GM12878 (cell line): ENCODE measurements at regions of chr11 and their contacts with region 1.

Region 1: GRCh38 chr11:64767344-64768299 is 7.8 kb upstream of the PYGM start:
- DNase-seq: no peak
- ATAC-seq: peak; percentile 56
- H3K4me3 ChIP-seq: no peak overlapping the region
- H3K27ac ChIP-seq: no peak overlapping the region
- H3K4me1 ChIP-seq: peaks cover 24% of the 10 kb centered on the region
- H3K27me3 ChIP-seq: no peaks in the 10 kb centered on the region
- CTCF ChIP-seq: peak; percentile 55 to 84 (median 72)
- EP300 ChIP-seq: no peak
- POLR2A ChIP-seq: peak; percentile 70
- RAD21 ChIP-seq: 0 out of 2 replicates have a peak, but pooled peaks have one; percentile 34

Region 2: GRCh38 chr11:64472593-64473455 is 294.8 kb before region 1 on chr11:
- CTCF ChIA-PET with region 1: no interaction called
- POLR2A ChIA-PET with region 1: no interaction called
- RAD21 ChIA-PET with region 1: no interaction called
- SMC1A ChIA-PET with region 1: no interaction called
- in situ Hi-C with region 1: no loop called
- intact Hi-C with region 1: no loop called
- DNase-seq: no peak
- ATAC-seq: no peak
- H3K4me3 ChIP-seq: no peak overlapping the region
- H3K27ac ChIP-seq: no peak overlapping the region
- H3K4me1 ChIP-seq: no peaks in the 10 kb centered on the region
- H3K27me3 ChIP-seq: peaks cover 0 to 2% of the 10 kb centered on the region in 2 experiments; a peak in 3 of 4 replicates
- CTCF ChIP-seq: no peak
- EP300 ChIP-seq: no peak
- POLR2A ChIP-seq: no peak
- RAD21 ChIP-seq: no peak

Region 3: GRCh38 chr11:64710418-64711137 is 57.0 kb before region 1 on chr11:
- CTCF ChIA-PET with region 1: no interaction called
- POLR2A ChIA-PET with region 1: no interaction called
- RAD21 ChIA-PET with region 1: no interaction called
- SMC1A ChIA-PET with region 1: no interaction called
- in situ Hi-C with region 1: no loop called
- intact Hi-C with region 1: no loop called
- DNase-seq: no peak
- ATAC-seq: no peak
- H3K4me3 ChIP-seq: no peak overlapping the region
- H3K27ac ChIP-seq: no peak overlapping the region
- H3K4me1 ChIP-seq: peaks cover 7% of the 10 kb centered on the region
- H3K27me3 ChIP-seq: peaks cover 4 to 10% of the 10 kb centered on the region in 2 experiments; a peak in 3 of 4 replicates
- CTCF ChIP-seq: no peak
- EP300 ChIP-seq: no peak
- POLR2A ChIP-seq: no peak
- RAD21 ChIP-seq: no peak

Region 4: GRCh38 chr11:64742889-64743590 is 24.6 kb before region 1 on chr11:
- CTCF ChIA-PET with region 1: interaction called, 16 read pairs
- POLR2A ChIA-PET with region 1: interaction called, 4 read pairs
- RAD21 ChIA-PET with region 1: interaction called, 5 read pairs
- SMC1A ChIA-PET with region 1: interaction called, 11 read pairs
- in situ Hi-C with region 1: no loop called
- intact Hi-C with region 1: loop called (anchors 2 kb)
- DNase-seq: no peak
- ATAC-seq: peak; percentile 70
- H3K4me3 ChIP-seq: peak overlapping the region; percentile 35
- H3K27ac ChIP-seq: no peak overlapping the region
- H3K4me1 ChIP-seq: peaks cover 29% of the 10 kb centered on the region
- H3K27me3 ChIP-seq: peaks cover 0 to 5% of the 10 kb centered on the region in 2 experiments; a peak in 3 of 4 replicates
- CTCF ChIP-seq: peak; percentile 69 to 93 (median 81)
- EP300 ChIP-seq: no peak
- POLR2A ChIP-seq: no peak
- RAD21 ChIP-seq: peak; percentile 62

Region 5: GRCh38 chr11:64787526-64788320 is 20.1 kb after region 1 on chr11:
- CTCF ChIA-PET with region 1: interaction called, 15 read pairs
- POLR2A ChIA-PET with region 1: interaction called, 7 read pairs
- RAD21 ChIA-PET with region 1: no interaction called
- SMC1A ChIA-PET with region 1: interaction called, 9 read pairs
- in situ Hi-C with region 1: no loop called
- intact Hi-C with region 1: no loop called
- DNase-seq: no peak
- ATAC-seq: peak; percentile 94
- H3K4me3 ChIP-seq: no peak overlapping the region
- H3K27ac ChIP-seq: no peak overlapping the region
- H3K4me1 ChIP-seq: peaks cover 5% of the 10 kb centered on the region
- H3K27me3 ChIP-seq: no peaks in the 10 kb centered on the region
- CTCF ChIP-seq: peak; percentile 68 to 87 (median 70)
- EP300 ChIP-seq: no peak
- POLR2A ChIP-seq: no peak
- RAD21 ChIP-seq: peak; percentile 70

Region 6: GRCh38 chr11:64803163-64803845 is 35.7 kb after region 1 on chr11 and contains the start of gene MAP4K2:
- CTCF ChIA-PET with region 1: interaction called, 3 read pairs
- POLR2A ChIA-PET with region 1: interaction called, 12 read pairs
- RAD21 ChIA-PET with region 1: interaction called, 8 read pairs
- SMC1A ChIA-PET with region 1: interaction called, 4 read pairs
- in situ Hi-C with region 1: no loop called
- intact Hi-C with region 1: no loop called
- DNase-seq: peak; percentile 3
- ATAC-seq: peak; percentile 73
- H3K4me3 ChIP-seq: peak within 1 kb of the TSS; percentile 87
- H3K27ac ChIP-seq: peak within 1 kb of the TSS; percentile 92
- H3K4me1 ChIP-seq: peaks cover 37% of the 10 kb centered on the region
- H3K27me3 ChIP-seq: no peaks in the 10 kb centered on the region
- CTCF ChIP-seq: peak in 2 of 3 experiments; percentile 6 to 25; a peak in 2 of 6 replicates
- EP300 ChIP-seq: no peak
- POLR2A ChIP-seq: peak; percentile 71
- RAD21 ChIP-seq: no peak
- polyA plus RNA-seq, gene MAP4K2: 0.98 to 4.4 TPM

Region 7: DNA sequence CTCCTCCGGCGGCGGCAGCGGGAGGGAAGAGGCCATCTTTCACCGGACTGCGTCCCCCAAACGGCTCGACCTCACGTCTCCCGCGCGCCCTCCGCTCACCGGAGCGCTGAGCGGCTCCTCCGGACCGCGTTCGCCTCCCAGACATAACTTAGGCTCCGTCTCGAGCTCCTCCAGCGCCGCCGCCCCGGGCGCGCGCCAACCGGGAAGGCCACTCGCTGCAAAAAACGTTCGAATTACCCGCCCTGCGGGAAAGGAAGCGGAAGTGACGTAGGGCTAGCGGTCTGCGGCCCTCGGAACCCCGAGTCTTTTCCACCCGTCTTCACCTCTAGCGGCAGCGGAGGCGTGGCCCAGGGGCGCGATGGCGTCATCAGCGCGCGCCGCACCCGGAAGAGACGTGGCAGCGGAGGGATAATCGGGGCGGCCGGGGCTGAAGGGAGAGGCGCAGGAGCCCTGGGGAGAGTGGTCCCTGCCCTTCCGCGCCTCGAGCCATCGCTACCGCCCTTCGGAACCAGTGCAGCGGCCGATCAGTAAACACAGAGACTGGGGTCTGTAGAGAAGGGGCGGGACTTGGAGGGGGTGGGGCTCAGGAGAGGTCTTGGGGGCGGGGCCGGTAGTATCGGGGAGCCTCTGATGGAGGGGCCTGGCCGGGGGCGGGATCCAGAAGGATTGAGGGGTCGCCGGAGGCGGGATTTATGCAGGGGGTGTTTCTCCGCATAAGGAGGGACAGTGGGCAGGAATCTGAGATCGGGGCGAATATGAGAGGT is 316.4 kb after region 1 on chr11 and contains the starts of genes CDCA5 and ZFPL1:
- CTCF ChIA-PET with region 1: no interaction called
- POLR2A ChIA-PET with region 1: no interaction called
- RAD21 ChIA-PET with region 1: no interaction called
- SMC1A ChIA-PET with region 1: no interaction called
- in situ Hi-C with region 1: no loop called
- intact Hi-C with region 1: no loop called
- DNase-seq: peak; percentile 75
- ATAC-seq: peak; percentile 82
- H3K4me3 ChIP-seq: peak within 1 kb of the TSS; percentile 86
- H3K27ac ChIP-seq: peak within 1 kb of the TSS; percentile 84
- H3K4me1 ChIP-seq: peaks cover 24% of the 10 kb centered on the region
- H3K27me3 ChIP-seq: no peaks in the 10 kb centered on the region
- CTCF ChIP-seq: no peak
- EP300 ChIP-seq: peak in 1 of 2 experiments; percentile 22; a peak in 1 of 4 replicates
- POLR2A ChIP-seq: peak; percentile 97
- RAD21 ChIP-seq: no peak
- polyA plus RNA-seq, gene CDCA5: 21.2 to 34.3 TPM
- polyA plus RNA-seq, gene ZFPL1: 2.2 to 5.6 TPM